Right ventricle myocardium inferior (tissue), 1 donor: ENCODE measurements at regions of chr5 and their contacts with region 1.

Region 1: DNA sequence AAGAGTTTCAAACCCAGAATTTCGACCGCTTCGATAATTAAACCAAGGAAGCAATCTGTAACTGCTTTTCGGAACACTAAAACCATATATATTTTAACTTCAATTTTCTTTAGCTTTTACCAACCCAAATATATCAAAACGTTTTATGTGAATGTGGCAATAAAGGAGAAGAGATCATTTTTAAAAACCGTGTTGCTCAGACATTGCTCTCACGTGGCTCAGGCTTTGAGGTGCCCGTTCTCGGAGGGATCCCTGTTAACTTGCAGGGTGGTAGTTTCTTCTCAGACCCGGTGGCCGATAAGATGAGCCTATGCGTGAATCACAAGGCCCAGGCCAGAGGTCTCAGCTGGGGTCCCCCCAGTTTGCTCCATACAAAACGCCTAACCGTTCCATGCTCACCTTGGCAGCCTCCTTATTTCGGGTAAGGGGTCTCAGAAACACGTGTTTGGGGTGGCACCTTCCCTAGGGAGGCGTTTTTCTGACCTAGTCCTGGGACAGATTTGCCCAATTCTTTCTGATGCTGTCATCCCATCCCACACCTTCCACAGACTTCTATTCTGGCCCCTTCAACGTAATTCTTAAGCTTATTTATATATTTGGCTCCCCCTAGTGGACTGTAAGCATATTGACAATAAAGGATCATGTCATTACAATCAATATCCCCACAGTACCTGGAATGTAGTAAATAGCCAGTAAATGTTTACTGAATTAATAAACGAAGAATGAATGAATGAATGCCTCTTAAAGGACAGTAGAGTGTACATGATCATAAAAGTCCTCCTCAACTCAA is 48.1 kb downstream of the THBS4 start:
- DNase-seq: no peak
- ATAC-seq: peak; percentile 88

Region 2: GRCh38 chr5:79689541-79690466 is 393.5 kb before region 1 on chr5 and contains the start of gene CMYA5:
- intact Hi-C with region 1: loop called (anchors 10 kb)
- DNase-seq: peak; percentile 75
- ATAC-seq: peak; percentile 75
- total RNA-seq, gene CMYA5: 886 TPM

Region 3: DNA sequence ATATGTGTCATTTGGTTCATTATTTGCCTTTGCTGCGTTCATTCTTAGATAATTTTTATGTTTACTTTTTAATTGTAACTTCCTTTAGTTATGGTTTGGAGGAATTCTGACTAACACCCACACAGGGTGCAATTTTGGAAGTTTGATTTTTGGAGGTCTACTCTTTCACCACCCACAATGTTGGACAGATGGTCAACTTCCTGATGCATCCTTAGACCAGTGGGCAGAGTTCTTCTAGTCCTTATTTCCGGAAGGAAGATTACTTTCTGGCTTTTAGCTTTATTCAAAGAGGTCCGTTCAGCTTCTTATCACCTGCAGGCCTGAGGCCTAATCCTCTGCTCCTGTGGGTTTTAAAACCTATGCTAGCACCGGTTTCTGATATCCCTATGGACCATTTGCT is 218.9 kb before region 1 on chr5:
- intact Hi-C with region 1: loop called (anchors 5 kb)
- DNase-seq: no peak
- ATAC-seq: no peak

Region 4: DNA sequence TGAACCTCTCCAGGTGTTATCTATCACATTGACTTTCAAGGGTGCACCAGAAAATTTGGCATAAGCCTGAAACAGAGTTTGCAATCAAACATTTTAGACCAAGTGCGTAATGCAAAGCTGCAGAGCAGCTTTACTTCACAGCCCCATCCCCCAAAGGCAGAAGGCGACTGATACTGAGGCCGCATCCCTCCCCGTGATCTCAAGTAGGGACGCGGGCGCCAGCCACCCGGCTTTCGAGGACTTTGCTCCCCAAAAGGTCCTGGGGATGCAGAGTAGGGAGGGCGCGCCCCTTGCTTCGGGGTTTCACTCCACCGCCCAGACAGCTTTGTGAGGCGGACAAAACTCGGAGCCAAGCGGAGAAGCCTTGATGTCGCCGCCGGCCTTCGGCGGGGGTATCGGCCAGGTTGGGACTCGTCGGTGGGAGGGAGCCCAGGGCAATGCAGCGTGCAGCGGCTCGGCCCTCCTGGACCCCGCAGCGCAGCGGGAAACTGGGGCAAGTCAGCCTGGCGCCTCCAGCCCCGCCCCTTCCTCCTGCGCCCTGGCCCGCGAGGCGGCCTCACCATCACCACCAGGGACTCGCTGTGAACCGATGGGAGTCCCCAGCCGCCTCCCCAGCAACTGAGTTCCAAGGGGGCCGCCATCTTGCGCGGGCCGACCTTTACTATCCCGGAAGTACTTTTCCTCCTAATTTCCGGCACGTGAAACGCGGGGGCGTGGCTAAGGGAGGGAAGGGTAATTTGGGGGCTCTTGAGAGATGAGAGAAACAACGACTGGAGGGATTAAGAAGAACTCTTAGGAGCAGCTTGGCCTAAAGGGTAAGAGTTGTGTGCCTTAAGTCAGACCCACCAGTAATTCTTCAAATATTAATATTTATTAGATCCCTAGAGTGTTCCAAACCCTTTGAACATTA is 92.4 kb before region 1 on chr5 and contains the start of gene MTX3:
- intact Hi-C with region 1: loop called (anchors 5 kb)
- DNase-seq: peak; percentile 93
- ATAC-seq: peak; percentile 96
- total RNA-seq, gene MTX3: 9.7 TPM

Region 5: DNA sequence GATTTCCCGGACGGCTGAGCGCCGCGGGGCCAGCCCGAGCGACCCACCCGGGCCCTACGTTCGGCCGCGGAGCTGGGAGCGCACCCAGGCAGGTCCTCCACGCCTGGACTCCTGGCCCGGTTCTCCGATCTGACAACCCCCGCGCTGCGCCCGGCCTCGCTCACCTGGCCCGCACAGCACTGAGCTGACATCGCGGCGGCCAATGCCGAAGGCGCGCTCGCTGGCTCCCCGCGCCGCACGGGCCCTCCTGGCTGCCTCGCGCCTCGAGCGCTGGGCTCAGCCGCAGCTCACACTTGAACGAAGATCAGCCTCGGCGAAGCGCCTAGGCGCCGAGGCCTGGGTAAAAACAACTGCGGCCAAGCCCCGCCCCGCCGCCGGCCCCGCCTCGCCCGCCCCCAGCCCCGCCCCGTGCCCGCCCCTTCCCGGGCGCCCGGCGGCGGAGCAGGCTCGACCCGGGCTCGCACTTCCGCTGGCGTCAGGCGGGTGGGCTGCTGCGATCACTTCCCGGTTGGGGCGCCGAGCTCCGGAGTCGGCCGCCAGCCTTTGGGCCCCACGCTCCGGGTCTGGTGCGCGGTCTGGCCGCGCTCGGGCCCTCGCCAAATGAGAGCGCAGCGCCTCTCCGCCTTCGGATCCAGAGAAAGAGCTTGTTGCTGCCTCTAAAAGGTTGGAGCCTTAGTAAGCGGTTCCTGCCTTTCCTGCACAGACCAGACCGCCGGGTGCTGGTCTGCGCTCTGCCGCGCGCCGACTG is 172.6 kb after region 1 on chr5 and contains the start of gene SERINC5:
- intact Hi-C with region 1: no loop called
- DNase-seq: peak; percentile 94
- ATAC-seq: peak; percentile 93
- total RNA-seq, gene SERINC5: 14.5 TPM